Naive thymus-derived CD4-positive, alpha-beta T cell (primary cell): ENCODE measurements at regions of chr7 and their contacts with region 1.

Region 1: GRCh38 chr7:106285051-106285854 is 470 bp upstream of the NAMPT start:
- DNase-seq: peak; percentile 92 to 99 (median 96)
- ATAC-seq: peak; percentile 94
- H3K4me3 ChIP-seq: peak overlapping the region; percentile 94
- H3K4me3 Mint-ChIP-seq: peak overlapping the region; percentile 91 to 99 (median 96)
- H3K27ac ChIP-seq: peak overlapping the region; percentile 94
- H3K27ac Mint-ChIP-seq: peak overlapping the region; percentile 84 to 99 (median 98)
- H3K4me1 ChIP-seq: peaks cover 9 to 10% of the 10 kb centered on the region in 2 donors
- H3K4me1 Mint-ChIP-seq: peaks cover 17 to 46% (median 33%) of the 10 kb centered on the region in 7 donors
- H3K27me3 ChIP-seq: no peaks in the 10 kb centered on the region
- H3K27me3 Mint-ChIP-seq: peaks cover 0 to under 1% (median 0%) of the 10 kb centered on the region in 5 donors

Region 2: GRCh38 chr7:105531792-105532671 is 753.2 kb before region 1 on chr7 and contains the start of gene RINT1:
- CTCF ChIA-PET with region 1: no interaction called
- POLR2A ChIA-PET with region 1: no interaction called
- intact Hi-C with region 1: loop called (anchors 1 to 5 kb)
- DNase-seq: peak; percentile 72 to 90 (median 81)
- ATAC-seq: peak; percentile 97
- H3K4me3 ChIP-seq: peak within 1 kb of the TSS; percentile 86
- H3K4me3 Mint-ChIP-seq: peak within 1 kb of the TSS; percentile 87 to 99 (median 93)
- H3K27ac ChIP-seq: peak within 1 kb of the TSS; percentile 83
- H3K27ac Mint-ChIP-seq: peak within 1 kb of the TSS; percentile 87 to 98 (median 92)
- H3K4me1 ChIP-seq: peaks cover 13 to 18% of the 10 kb centered on the region in 2 donors
- H3K4me1 Mint-ChIP-seq: peaks cover 21 to 59% (median 38%) of the 10 kb centered on the region in 7 donors
- H3K27me3 ChIP-seq: no peaks in the 10 kb centered on the region
- H3K27me3 Mint-ChIP-seq: no peaks in the 10 kb centered on the region
- total RNA-seq, gene RINT1: 23.0 to 31.8 (median 26.0) TPM

Region 3: DNA sequence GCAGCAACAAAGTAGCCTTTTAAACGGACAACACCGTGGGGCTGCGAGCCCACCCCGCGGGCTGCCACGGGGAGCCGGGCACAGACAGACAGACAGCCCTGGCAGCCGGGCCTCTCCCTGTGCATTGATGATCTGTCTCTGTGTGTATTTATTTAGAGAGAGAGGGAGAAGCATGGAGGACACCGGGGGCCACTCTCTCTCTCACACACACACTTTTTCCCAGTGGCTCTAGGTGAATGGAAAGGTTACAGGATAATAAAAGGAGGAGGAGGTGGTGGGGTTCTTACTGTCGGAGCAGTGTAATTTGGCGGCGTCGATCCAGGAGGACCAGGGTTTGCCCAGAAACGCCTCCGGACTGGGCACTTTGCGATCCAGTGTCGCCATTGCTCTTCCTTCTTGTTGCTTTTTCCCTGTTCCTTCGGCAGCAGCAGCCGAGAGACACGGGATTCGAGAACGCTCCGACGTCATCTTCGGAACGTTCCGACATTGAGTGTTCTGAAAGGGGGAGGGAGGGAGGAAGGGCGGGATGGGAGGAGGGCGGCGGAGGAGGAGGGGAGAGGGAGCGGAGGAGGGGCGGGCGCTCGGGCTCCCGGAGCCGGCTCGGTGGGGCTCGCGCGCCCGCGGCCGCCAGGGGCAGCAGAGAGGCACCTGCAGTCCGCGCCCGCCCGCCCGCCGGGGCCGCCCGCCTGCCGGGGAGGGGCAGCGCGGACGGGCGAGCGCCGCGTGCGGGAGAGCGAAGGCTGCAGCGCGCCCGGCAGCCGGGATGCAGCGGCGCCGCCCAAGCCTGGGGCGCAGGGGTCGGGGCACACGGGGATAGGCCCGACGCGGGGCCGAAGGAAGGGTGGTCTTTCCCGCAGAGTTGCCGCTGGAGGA is 408.9 kb before region 1 on chr7 and contains the start of gene ATXN7L1:
- CTCF ChIA-PET with region 1: no interaction called
- POLR2A ChIA-PET with region 1: no interaction called
- intact Hi-C with region 1: loop called in 1 of 2 experiments (anchors 2 kb)
- DNase-seq: peak; percentile 75 to 94 (median 87)
- ATAC-seq: peak; percentile 99
- H3K4me3 ChIP-seq: peak within 1 kb of the TSS; percentile 97
- H3K4me3 Mint-ChIP-seq: peak within 1 kb of the TSS; percentile 90 to 100 (median 99)
- H3K27ac ChIP-seq: peak within 1 kb of the TSS; percentile 81
- H3K27ac Mint-ChIP-seq: peak within 1 kb of the TSS; percentile 85 to 99 (median 98)
- H3K4me1 ChIP-seq: peaks cover 10 to 33% of the 10 kb centered on the region in 2 donors
- H3K4me1 Mint-ChIP-seq: peaks cover 34 to 73% (median 52%) of the 10 kb centered on the region in 7 donors
- H3K27me3 ChIP-seq: no peaks in the 10 kb centered on the region
- H3K27me3 Mint-ChIP-seq: peaks cover 0 to 34% (median 0%) of the 10 kb centered on the region in 5 donors
- total RNA-seq, gene ATXN7L1: 18.5 to 52.4 (median 46.7) TPM

Region 4: DNA sequence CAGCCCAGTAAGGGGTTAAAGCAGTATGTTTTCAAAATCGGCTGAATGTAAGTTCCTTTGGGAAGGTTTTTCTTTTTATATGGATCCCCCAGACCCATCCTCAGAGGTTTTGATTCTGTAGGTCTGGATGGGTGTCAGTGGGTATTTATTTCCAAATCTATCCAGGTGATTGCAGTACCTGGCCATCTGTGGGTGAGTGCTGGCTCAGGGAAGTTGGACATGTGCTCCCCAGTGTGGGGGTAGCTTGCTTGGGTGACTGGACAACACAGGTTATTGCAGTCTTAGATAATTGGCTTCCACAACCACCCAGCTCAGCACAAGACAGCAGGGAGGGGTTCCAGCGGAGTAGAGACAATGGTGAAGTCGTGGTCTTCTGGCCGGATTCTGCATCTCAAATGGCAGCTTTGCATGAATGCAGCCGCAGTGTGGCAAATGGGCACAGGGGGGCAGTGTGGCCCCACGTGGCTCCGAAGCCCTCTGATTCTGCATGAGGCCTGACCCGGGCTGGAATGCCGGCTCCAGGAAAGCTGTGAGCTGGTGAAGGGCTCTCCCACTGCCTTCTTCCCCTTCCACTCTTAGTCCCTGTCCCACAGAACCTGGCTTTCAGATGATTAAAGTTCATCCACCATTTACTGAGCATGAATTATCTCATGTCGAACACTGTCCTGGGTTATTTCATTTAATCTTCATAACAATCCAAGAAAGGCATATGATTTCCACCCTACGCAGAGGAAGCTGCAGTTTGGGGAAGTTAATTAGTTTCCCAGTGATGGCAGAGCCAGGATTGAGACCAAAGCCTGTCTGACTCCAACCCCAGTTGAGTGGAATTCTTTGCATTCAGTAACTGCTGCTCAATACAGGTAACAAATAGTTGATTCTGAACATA is 108.6 kb before region 1 on chr7:
- CTCF ChIA-PET with region 1: no interaction called
- POLR2A ChIA-PET with region 1: no interaction called
- intact Hi-C with region 1: loop called in 1 of 2 experiments (anchors 5 kb)
- DNase-seq: peak; percentile 24 to 73 (median 57)
- ATAC-seq: peak; percentile 92
- H3K4me3 ChIP-seq: no peak overlapping the region
- H3K4me3 Mint-ChIP-seq: no peak overlapping the region
- H3K27ac ChIP-seq: no peak overlapping the region
- H3K27ac Mint-ChIP-seq: no peak overlapping the region
- H3K4me1 ChIP-seq: no peaks in the 10 kb centered on the region
- H3K4me1 Mint-ChIP-seq: peaks cover 0 to 5% (median 0%) of the 10 kb centered on the region in 7 donors
- H3K27me3 ChIP-seq: peaks cover 0 to 7% of the 10 kb centered on the region in 2 donors
- H3K27me3 Mint-ChIP-seq: peaks cover 9 to 22% (median 19%) of the 10 kb centered on the region in 5 donors

Region 5: DNA sequence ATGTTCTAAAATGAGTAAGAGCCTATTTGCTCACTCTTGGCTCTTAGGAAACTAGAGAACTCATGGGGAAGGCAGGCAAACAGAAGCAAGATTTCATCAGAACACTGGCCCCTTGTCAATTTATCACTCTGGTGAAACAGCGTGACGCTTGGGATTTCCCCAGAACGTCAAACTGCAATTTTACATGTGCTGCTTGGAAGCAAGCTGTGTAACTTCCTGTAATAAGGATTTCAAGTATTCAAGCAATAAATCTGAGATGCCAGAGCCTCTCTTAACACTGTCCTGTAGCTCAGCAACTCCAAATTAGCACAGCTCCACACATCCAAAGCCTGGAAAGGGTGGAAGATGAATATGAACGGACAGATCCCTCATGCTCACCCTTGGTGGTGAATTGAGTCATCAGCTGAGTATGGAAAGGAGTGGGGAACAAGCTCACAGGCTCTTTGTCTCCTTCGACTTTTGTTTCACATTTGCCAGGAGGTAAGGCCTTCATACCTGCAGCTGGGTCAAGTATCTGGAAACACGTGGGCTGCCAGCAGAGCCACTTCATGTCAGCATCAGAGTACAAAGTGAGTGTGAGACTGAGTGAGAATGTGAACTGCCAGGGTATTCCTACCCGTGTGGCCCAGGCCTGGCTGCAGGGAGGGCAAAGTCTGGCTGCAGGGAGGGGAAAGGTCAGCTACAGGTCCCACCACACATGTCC is 139.9 kb after region 1 on chr7:
- CTCF ChIA-PET with region 1: no interaction called
- POLR2A ChIA-PET with region 1: no interaction called
- intact Hi-C with region 1: loop called in 1 of 2 experiments (anchors 1 kb)
- DNase-seq: peak in 2 of 9 donors; percentile 5 to 64
- ATAC-seq: peak; percentile 78
- H3K4me3 ChIP-seq: no peak overlapping the region
- H3K4me3 Mint-ChIP-seq: peak overlapping the region in 1 of 10 donors; percentile 58
- H3K27ac ChIP-seq: no peak overlapping the region
- H3K27ac Mint-ChIP-seq: peak overlapping the region in 1 of 9 donors; percentile 87
- H3K4me1 ChIP-seq: no peaks in the 10 kb centered on the region
- H3K4me1 Mint-ChIP-seq: peaks cover 0 to 28% (median 6%) of the 10 kb centered on the region in 7 donors
- H3K27me3 ChIP-seq: no peaks in the 10 kb centered on the region
- H3K27me3 Mint-ChIP-seq: peaks cover 0 to 36% (median 13%) of the 10 kb centered on the region in 5 donors

Region 6: GRCh38 chr7:106767498-106768323 is 482.5 kb after region 1 on chr7:
- CTCF ChIA-PET with region 1: no interaction called
- POLR2A ChIA-PET with region 1: no interaction called
- intact Hi-C with region 1: loop called in 1 of 2 experiments (anchors 10 kb)
- DNase-seq: peak in 7 of 9 donors; percentile 5 to 38 (median 18)
- ATAC-seq: peak; percentile 71
- H3K4me3 ChIP-seq: peak overlapping the region; percentile 36
- H3K4me3 Mint-ChIP-seq: peak overlapping the region; percentile 58 to 83 (median 74)
- H3K27ac ChIP-seq: no peak overlapping the region
- H3K27ac Mint-ChIP-seq: peak overlapping the region; percentile 26 to 94 (median 56)
- H3K4me1 ChIP-seq: peaks cover 9 to 15% of the 10 kb centered on the region in 2 donors
- H3K4me1 Mint-ChIP-seq: peaks cover 15 to 33% (median 28%) of the 10 kb centered on the region in 7 donors
- H3K27me3 ChIP-seq: no peaks in the 10 kb centered on the region
- H3K27me3 Mint-ChIP-seq: no peaks in the 10 kb centered on the region

Region 7: GRCh38 chr7:107890962-107891635 is 1605.8 kb after region 1 on chr7 and contains the start of gene DLD:
- CTCF ChIA-PET with region 1: no interaction called
- POLR2A ChIA-PET with region 1: no interaction called
- intact Hi-C with region 1: loop called (anchors 2 kb)
- DNase-seq: peak; percentile 89 to 94 (median 93)
- ATAC-seq: peak; percentile 98
- H3K4me3 ChIP-seq: peak within 1 kb of the TSS; percentile 93
- H3K4me3 Mint-ChIP-seq: peak within 1 kb of the TSS; percentile 89 to 100 (median 97)
- H3K27ac ChIP-seq: peak within 1 kb of the TSS; percentile 97
- H3K27ac Mint-ChIP-seq: peak within 1 kb of the TSS; percentile 94 to 100 (median 98)
- H3K4me1 ChIP-seq: peaks cover 5 to 35% of the 10 kb centered on the region in 2 donors
- H3K4me1 Mint-ChIP-seq: peaks cover 20 to 55% (median 52%) of the 10 kb centered on the region in 7 donors
- H3K27me3 ChIP-seq: no peaks in the 10 kb centered on the region
- H3K27me3 Mint-ChIP-seq: peaks cover 0 to 3% (median 0%) of the 10 kb centered on the region in 5 donors
- total RNA-seq, gene DLD: 44.5 to 69.3 (median 53.7) TPM